Calu3 (cell line): ENCODE measurements at regions of chr2 and their contacts with region 1.

Region 1: GRCh38 chr2:165698444-165698894 is 95.6 kb downstream of the GALNT3 start:
- DNase-seq: peak; percentile 38
- H3K4me3 Mint-ChIP-seq: no peak overlapping the region
- H3K27ac Mint-ChIP-seq: no peak overlapping the region
- H3K4me1 Mint-ChIP-seq: no peaks in the 10 kb centered on the region
- H3K27me3 Mint-ChIP-seq: peaks cover 12% of the 10 kb centered on the region
- CTCF ChIP-seq: no peak

Region 2: GRCh38 chr2:164717000-164717803 is 981.3 kb before region 1 on chr2:
- CTCF ChIA-PET with region 1: no interaction called
- intact Hi-C with region 1: no loop called
- DNase-seq: peak; percentile 28
- H3K4me3 Mint-ChIP-seq: no peak overlapping the region
- H3K27ac Mint-ChIP-seq: no peak overlapping the region
- H3K4me1 Mint-ChIP-seq: peaks cover 30% of the 10 kb centered on the region
- H3K27me3 Mint-ChIP-seq: no peaks in the 10 kb centered on the region
- CTCF ChIP-seq: peak; percentile 41

Region 3: DNA sequence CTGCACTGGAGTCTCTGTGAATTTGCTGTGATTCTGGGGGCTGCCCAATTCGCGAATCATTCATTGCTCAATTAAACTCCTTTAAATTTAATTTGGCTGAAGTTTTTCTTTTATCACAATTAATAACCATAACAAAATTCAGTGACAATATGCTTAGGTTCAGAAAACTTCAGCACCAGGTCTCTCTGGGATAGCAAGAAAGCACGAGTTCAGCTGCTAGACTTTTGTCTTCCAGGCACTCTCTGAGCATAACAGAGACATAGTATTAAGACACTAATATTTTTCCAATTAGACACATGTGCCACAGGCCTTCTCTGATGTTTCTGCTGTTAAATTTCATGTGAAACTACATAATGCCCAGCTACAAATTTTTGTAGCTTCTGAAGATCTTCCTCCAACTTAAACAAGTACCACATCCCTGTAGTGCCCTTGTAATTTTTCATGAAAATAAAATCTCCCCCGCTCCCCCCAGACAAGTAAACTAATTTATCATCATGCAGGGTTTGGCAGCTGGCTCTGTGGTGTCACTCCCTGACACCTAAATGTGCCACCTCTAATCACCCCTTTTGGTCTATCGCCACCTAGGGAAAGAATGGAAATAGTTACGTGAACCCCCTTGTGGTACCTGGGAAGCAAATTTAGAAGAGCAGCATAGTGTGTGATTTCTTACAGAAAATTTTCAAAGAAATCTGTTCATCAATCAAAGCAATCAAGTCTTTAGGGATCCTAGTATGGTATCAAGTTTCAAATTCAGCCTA is 134.8 kb before region 1 on chr2:
- CTCF ChIA-PET with region 1: interaction called, 3 read pairs
- intact Hi-C with region 1: loop called (anchors 5 kb)
- DNase-seq: peak; percentile 13
- H3K4me3 Mint-ChIP-seq: no peak overlapping the region
- H3K27ac Mint-ChIP-seq: no peak overlapping the region
- H3K4me1 Mint-ChIP-seq: no peaks in the 10 kb centered on the region
- H3K27me3 Mint-ChIP-seq: no peaks in the 10 kb centered on the region
- CTCF ChIP-seq: peak; percentile 34

Region 4: DNA sequence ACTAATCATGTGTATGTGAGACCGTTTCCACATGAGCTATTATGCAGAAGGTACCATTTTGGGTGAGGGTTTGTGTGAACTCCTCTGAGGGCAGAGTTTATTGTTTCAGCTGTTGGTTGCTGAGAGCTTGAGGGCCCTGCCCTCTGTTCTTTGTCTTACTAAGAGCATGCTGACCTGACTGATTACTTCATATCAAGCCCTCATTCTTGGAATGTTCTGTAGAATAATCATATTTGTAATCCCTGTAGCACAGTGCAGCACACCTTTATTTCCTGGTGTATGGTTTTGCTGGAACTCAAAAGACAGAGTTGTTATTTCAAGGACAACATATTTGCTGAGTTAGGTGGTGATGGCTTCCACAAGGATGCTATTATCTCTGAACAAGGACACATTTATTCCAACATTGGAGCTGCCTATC is 22.9 kb before region 1 on chr2:
- CTCF ChIA-PET with region 1: no interaction called
- intact Hi-C with region 1: loop called (anchors 2 kb)
- DNase-seq: peak; percentile 25
- H3K4me3 Mint-ChIP-seq: no peak overlapping the region
- H3K27ac Mint-ChIP-seq: no peak overlapping the region
- H3K4me1 Mint-ChIP-seq: peaks cover 18% of the 10 kb centered on the region
- H3K27me3 Mint-ChIP-seq: no peaks in the 10 kb centered on the region
- CTCF ChIP-seq: no peak